ENCODE measurements at regions of chr6 and their contacts with region 1.

Region 1: DNA sequence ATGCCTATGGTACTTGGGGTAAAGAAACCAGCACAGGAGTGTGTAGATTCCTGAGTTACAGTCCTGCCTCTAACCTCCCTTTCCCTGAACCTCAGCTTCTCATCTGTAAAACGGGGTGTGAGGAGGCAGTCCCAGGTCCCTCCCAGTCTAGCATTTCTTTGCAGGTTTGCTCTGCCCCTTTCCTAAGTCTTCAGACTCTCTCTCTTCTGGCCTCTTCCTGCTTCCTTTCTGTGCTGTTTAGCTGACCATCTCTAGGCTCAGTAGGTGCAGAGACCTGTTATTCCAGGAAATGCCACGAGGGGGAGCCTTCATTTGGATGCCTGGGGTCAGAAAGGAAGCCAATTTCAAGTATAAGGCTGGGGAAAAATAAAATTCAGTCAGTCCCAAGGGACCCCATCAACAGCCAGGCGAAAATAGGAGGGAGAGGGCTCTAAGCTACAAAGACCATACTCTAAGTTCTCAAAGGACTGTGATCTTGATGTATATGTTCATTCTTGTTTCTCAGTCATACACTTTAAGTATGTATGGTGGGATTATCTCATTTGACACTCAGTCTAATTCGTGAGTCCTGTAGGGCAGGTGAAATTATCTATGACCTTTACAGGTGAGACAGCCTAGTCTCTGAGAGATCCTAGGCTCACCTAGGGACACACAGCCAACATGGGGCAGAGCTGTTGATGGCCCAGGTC is 89.1 kb downstream of the NCR2 start:
- DNase-seq: peak; percentile 79 to 88
- H3K4me3 ChIP-seq: no peak overlapping the region
- H3K4me3 Mint-ChIP-seq: no peak overlapping the region
- H3K27ac Mint-ChIP-seq: no peak overlapping the region
- H3K4me1 ChIP-seq: peaks cover 31% of the 10 kb centered on the region
- H3K4me1 Mint-ChIP-seq: no peaks in the 10 kb centered on the region
- H3K27me3 ChIP-seq: no peaks in the 10 kb centered on the region
- H3K27me3 Mint-ChIP-seq: no peaks in the 10 kb centered on the region
- CTCF ChIP-seq: peak; percentile 79 to 82

Region 2: DNA sequence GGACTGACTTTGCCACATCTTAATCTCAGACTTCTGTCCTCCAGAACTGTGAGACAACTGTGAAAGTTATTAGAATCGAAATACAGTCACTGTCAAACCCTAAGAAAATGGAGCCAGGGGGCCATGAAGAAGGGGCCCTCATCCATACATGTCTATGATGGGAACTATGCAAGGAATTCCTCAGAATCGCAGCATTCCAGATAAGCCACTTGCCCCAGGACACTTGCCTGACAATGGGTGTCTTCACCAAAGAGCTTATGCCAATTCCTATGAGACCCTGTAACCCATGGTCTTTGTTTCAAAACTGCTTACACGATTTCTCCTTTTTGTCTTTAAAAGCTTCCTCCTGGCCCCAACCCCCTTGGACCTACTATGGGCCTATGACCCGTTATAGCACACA is 31.3 kb after region 1 on chr6:
- CTCF ChIA-PET with region 1: interaction called, 8 read pairs
- POLR2A ChIA-PET with region 1: no interaction called
- intact Hi-C with region 1: loop called (anchors 1 kb)
- DNase-seq: peak; percentile 40 to 68
- H3K4me3 ChIP-seq: no peak overlapping the region
- H3K4me3 Mint-ChIP-seq: peak overlapping the region; percentile 52
- H3K27ac Mint-ChIP-seq: peak overlapping the region; percentile 96
- H3K4me1 ChIP-seq: peaks cover 60% of the 10 kb centered on the region
- H3K4me1 Mint-ChIP-seq: peaks cover 37% of the 10 kb centered on the region
- H3K27me3 ChIP-seq: no peaks in the 10 kb centered on the region
- H3K27me3 Mint-ChIP-seq: no peaks in the 10 kb centered on the region
- CTCF ChIP-seq: no peak

Region 3: GRCh38 chr6:41545703-41546474 is 121.4 kb after region 1 on chr6 and contains the start of gene FOXP4:
- CTCF ChIA-PET with region 1: no interaction called
- POLR2A ChIA-PET with region 1: no interaction called
- intact Hi-C with region 1: loop called (anchors 2 kb)
- DNase-seq: peak; percentile 90 to 94
- H3K4me3 ChIP-seq: peak within 1 kb of the TSS; percentile 95
- H3K4me3 Mint-ChIP-seq: peak within 1 kb of the TSS; percentile 91
- H3K27ac Mint-ChIP-seq: peak within 1 kb of the TSS; percentile 88
- H3K4me1 ChIP-seq: peaks cover 41% of the 10 kb centered on the region
- H3K4me1 Mint-ChIP-seq: peaks cover 29% of the 10 kb centered on the region
- H3K27me3 ChIP-seq: no peaks in the 10 kb centered on the region
- H3K27me3 Mint-ChIP-seq: no peaks in the 10 kb centered on the region
- CTCF ChIP-seq: no peak
- total RNA-seq, gene FOXP4: 108 and 117 TPM in 2 replicates

Region 4: GRCh38 chr6:41561931-41562911 is 137.7 kb after region 1 on chr6:
- CTCF ChIA-PET with region 1: no interaction called
- POLR2A ChIA-PET with region 1: no interaction called
- intact Hi-C with region 1: no loop called
- DNase-seq: no peak
- H3K4me3 ChIP-seq: no peak overlapping the region
- H3K4me3 Mint-ChIP-seq: no peak overlapping the region
- H3K27ac Mint-ChIP-seq: no peak overlapping the region
- H3K4me1 ChIP-seq: no peaks in the 10 kb centered on the region; the same call in 1 of the 2 replicates
- H3K4me1 Mint-ChIP-seq: peaks cover 22% of the 10 kb centered on the region
- H3K27me3 ChIP-seq: no peaks in the 10 kb centered on the region
- H3K27me3 Mint-ChIP-seq: no peaks in the 10 kb centered on the region
- CTCF ChIP-seq: no peak

Region 5: DNA sequence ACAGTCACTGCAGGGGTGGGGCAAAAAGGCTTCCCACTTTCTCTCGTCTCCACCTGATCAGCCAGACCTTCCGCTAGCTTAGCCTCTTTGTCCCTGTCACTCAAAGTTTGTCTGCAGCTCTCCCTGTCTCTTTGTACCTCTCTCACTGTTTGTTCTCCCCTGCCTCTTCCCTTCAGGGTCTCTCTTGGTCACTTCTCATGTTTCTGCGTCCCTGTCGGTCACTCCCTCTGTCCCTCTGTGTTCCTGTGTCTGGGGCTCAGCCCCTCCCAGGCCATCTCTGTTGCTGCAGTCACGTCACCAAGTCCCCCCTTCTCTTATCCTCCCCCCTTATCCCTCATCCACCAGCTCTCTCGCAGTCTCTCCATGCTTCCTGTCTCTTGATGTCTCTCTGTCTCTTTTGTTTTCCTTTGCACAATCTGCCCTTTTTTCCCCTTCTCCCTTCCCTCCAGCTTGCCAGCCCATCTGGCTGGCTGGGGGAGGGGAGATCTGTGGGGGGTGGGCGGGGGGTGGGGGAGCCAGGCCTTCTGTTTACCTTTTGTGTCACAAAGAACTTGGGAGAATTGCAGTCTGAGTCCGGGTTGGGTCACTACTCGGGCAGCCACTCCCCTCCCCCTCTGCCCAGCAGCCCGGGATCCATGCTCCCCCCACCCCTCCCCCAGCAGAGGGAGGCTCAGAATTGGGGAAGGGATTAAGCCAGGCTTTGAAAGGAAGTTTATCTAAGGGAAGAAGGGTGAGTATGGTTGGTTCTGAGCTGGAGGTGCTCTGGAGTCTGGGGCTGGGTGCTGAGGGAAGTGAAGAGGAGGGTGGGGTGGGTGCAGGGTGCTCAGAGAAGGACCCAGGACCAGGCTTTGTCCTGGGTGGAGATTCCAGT is 153.9 kb after region 1 on chr6:
- CTCF ChIA-PET with region 1: interaction called, 4 read pairs
- POLR2A ChIA-PET with region 1: interaction called, 12 read pairs
- intact Hi-C with region 1: no loop called
- DNase-seq: peak; percentile 73 to 78
- H3K4me3 ChIP-seq: no peak overlapping the region
- H3K4me3 Mint-ChIP-seq: peak overlapping the region; percentile 54
- H3K27ac Mint-ChIP-seq: peak overlapping the region; percentile 67
- H3K4me1 ChIP-seq: peaks cover 71% of the 10 kb centered on the region
- H3K4me1 Mint-ChIP-seq: peaks cover 35% of the 10 kb centered on the region
- H3K27me3 ChIP-seq: no peaks in the 10 kb centered on the region
- H3K27me3 Mint-ChIP-seq: no peaks in the 10 kb centered on the region
- CTCF ChIP-seq: no peak

Region 6: GRCh38 chr6:41591859-41592502 is 167.5 kb after region 1 on chr6:
- CTCF ChIA-PET with region 1: interaction called, 3 read pairs
- POLR2A ChIA-PET with region 1: no interaction called
- intact Hi-C with region 1: loop called (anchors 1 kb)
- DNase-seq: peak; percentile 70 to 84
- H3K4me3 ChIP-seq: no peak overlapping the region
- H3K4me3 Mint-ChIP-seq: no peak overlapping the region
- H3K27ac Mint-ChIP-seq: peak overlapping the region; percentile 71
- H3K4me1 ChIP-seq: no peaks in the 10 kb centered on the region
- H3K4me1 Mint-ChIP-seq: peaks cover 24% of the 10 kb centered on the region
- H3K27me3 ChIP-seq: no peaks in the 10 kb centered on the region
- H3K27me3 Mint-ChIP-seq: no peaks in the 10 kb centered on the region
- CTCF ChIP-seq: peak; percentile 88 to 94

Region 7: DNA sequence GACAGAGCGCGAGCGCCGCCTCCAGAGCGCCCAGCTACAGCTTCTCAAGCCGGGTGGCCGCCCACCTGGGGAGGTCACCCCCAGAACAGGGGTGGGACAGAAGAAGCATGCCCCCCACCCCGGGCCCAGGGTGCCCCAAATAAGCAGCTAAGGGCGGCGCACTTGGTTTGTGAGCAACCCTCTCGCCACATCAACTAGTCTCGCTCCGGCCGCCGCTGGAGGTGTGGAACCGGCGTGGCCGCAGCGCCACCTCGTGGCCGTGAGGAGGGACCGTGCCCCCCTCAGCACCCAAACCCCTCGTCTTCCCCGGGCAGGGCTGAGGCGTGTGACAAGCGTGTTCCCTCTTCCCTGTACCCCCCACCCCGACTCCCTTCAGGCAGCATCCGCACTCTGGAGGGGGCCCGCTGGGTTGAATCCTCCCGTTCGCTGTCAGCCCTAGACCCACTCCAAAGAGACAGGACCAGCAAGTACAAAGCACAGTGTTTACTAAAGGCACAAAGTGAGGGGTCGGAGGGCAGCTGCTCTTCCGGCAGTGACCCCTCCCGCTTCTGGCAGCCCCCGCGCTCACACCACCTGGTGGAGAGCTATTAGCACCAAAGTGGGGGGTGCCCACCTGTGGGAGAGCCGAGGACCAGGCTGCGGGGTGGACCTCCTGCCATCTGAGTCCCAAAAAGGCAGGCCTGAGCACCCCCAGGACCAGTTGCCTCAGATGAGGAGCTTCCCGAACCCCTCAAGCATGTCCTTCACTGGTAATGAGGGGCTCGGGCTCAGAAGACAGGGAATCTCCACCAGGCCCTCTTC is 259.2 kb after region 1 on chr6:
- CTCF ChIA-PET with region 1: interaction called, 7 read pairs
- POLR2A ChIA-PET with region 1: no interaction called
- intact Hi-C with region 1: loop called (anchors 1 kb)
- DNase-seq: peak; percentile 65 to 83
- H3K4me3 ChIP-seq: no peak overlapping the region
- H3K4me3 Mint-ChIP-seq: peak overlapping the region; percentile 45
- H3K27ac Mint-ChIP-seq: no peak overlapping the region
- H3K4me1 ChIP-seq: peaks cover 7% of the 10 kb centered on the region; the same call in 1 of the 2 replicates
- H3K4me1 Mint-ChIP-seq: no peaks in the 10 kb centered on the region
- H3K27me3 ChIP-seq: no peaks in the 10 kb centered on the region
- H3K27me3 Mint-ChIP-seq: no peaks in the 10 kb centered on the region
- CTCF ChIP-seq: peak; percentile 85 to 89